ENCODE measurements at regions of chr19 and their contacts with region 1.

Region 1: GRCh38 chr19:10510301-10510802 is 6.9 kb downstream of the S1PR5 start:
- DNase-seq: peak; percentile 92
- H3K4me3 Mint-ChIP-seq: no peak overlapping the region
- H3K27ac Mint-ChIP-seq: no peak overlapping the region
- H3K4me1 Mint-ChIP-seq: peaks cover 22% of the 10 kb centered on the region
- H3K27me3 Mint-ChIP-seq: peaks cover 26% of the 10 kb centered on the region

Region 2: GRCh38 chr19:10279737-10280442 is 230.5 kb before region 1 on chr19:
- intact Hi-C with region 1: no loop called
- DNase-seq: no peak
- H3K4me3 Mint-ChIP-seq: no peak overlapping the region
- H3K27ac Mint-ChIP-seq: peak overlapping the region; percentile 74
- H3K4me1 Mint-ChIP-seq: peaks cover 22% of the 10 kb centered on the region
- H3K27me3 Mint-ChIP-seq: no peaks in the 10 kb centered on the region

Region 3: DNA sequence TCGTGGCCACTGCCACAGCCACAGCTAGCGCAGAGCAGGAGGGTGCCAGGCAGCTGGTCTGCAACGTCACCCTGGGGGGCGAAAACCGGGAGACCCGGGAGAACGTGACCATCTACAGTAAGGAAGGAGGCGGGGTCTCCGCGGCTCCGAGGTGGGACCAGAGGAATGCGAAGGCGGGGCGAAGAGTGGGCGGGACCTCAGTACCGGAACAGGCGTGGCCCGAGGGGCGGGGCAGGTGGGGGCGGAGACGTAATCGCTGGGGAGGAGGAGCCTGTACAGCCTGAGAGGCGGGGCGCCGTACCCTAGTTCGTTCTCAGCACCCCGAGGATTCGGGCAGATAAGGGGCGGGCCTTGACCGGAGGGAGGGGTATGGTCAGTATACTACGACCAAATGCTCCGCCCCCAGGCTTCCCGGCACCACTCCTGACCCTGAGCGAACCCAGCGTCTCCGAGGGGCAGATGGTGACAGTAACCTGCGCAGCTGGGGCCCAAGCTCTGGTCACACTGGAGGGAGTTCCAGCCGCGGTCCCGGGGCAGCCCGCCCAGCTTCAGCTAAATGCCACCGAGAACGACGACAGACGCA is 218.1 kb before region 1 on chr19:
- intact Hi-C with region 1: loop called (anchors 5 kb)
- DNase-seq: peak; percentile 92
- H3K4me3 Mint-ChIP-seq: peak overlapping the region; percentile 88
- H3K27ac Mint-ChIP-seq: peak overlapping the region; percentile 43
- H3K4me1 Mint-ChIP-seq: peaks cover 59% of the 10 kb centered on the region
- H3K27me3 Mint-ChIP-seq: peaks cover 54% of the 10 kb centered on the region

Region 4: GRCh38 chr19:10551698-10552301 is 41.4 kb after region 1 on chr19:
- intact Hi-C with region 1: loop called (anchors 5 kb)
- DNase-seq: peak; percentile 80
- H3K4me3 Mint-ChIP-seq: no peak overlapping the region
- H3K27ac Mint-ChIP-seq: peak overlapping the region; percentile 67
- H3K4me1 Mint-ChIP-seq: peaks cover 45% of the 10 kb centered on the region
- H3K27me3 Mint-ChIP-seq: no peaks in the 10 kb centered on the region